ENCODE measurements at regions of chr10 and their contacts with region 1.

Region 1: DNA sequence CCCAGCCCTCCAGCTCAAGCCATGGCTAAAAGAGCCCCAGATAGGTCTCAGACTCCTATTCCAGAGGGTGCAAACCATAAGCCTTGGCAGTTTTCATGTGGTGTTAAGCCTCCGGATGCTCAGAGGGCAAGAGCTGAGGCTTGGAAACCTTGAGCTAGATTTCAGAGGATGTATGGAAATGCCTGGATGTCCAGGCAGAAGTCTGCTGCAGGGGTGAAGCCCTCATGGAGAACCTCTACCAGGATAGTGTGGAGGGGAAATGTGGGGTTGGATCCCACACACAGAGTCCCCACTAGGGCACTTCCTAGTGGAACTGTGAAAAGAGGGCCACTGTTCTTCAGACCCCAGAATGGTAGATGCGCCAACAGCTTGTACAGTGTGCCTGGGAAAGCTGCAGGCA is 13.2 kb upstream of the HPSE2 start:
- DNase-seq: no peak
- ATAC-seq: no peak
- H3K4me3 ChIP-seq: no peak overlapping the region
- H3K27ac ChIP-seq: no peak overlapping the region
- H3K4me1 ChIP-seq: no peaks in the 10 kb centered on the region
- H3K27me3 ChIP-seq: no peaks in the 10 kb centered on the region
- CTCF ChIP-seq: no peak
- POLR2A ChIP-seq: no peak
- RAD21 ChIP-seq: no peak

Region 2: GRCh38 chr10:97914837-97915211 is 1334.0 kb before region 1 on chr10:
- CTCF ChIA-PET with region 1: no interaction called
- POLR2A ChIA-PET with region 1: no interaction called
- dilution Hi-C with region 1: no loop called
- in situ Hi-C with region 1: no loop called
- intact Hi-C with region 1: loop called (anchors 5 kb)
- DNase-seq: peak; percentile 37
- ATAC-seq: peak; percentile 97
- H3K4me3 ChIP-seq: no peak overlapping the region
- H3K27ac ChIP-seq: no peak overlapping the region
- H3K4me1 ChIP-seq: no peaks in the 10 kb centered on the region
- H3K27me3 ChIP-seq: peaks cover 27% of the 10 kb centered on the region
- CTCF ChIP-seq: peak; percentile 80
- POLR2A ChIP-seq: no peak
- RAD21 ChIP-seq: peak; percentile 86

Region 3: GRCh38 chr10:98028168-98028770 is 1220.6 kb before region 1 on chr10:
- CTCF ChIA-PET with region 1: no interaction called
- POLR2A ChIA-PET with region 1: no interaction called
- dilution Hi-C with region 1: no loop called
- in situ Hi-C with region 1: no loop called
- intact Hi-C with region 1: no loop called
- DNase-seq: peak; percentile 3
- ATAC-seq: no peak
- H3K4me3 ChIP-seq: no peak overlapping the region
- H3K27ac ChIP-seq: no peak overlapping the region
- H3K4me1 ChIP-seq: no peaks in the 10 kb centered on the region
- H3K27me3 ChIP-seq: peaks cover 62% of the 10 kb centered on the region
- CTCF ChIP-seq: peak; percentile 41
- POLR2A ChIP-seq: no peak
- RAD21 ChIP-seq: peak; percentile 13

Region 4: GRCh38 chr10:98748298-98748697 is 500.5 kb before region 1 on chr10:
- CTCF ChIA-PET with region 1: no interaction called
- POLR2A ChIA-PET with region 1: no interaction called
- dilution Hi-C with region 1: no loop called
- in situ Hi-C with region 1: no loop called
- intact Hi-C with region 1: loop called (anchors 1 kb)
- DNase-seq: peak; percentile 38
- ATAC-seq: no peak
- H3K4me3 ChIP-seq: no peak overlapping the region
- H3K27ac ChIP-seq: no peak overlapping the region
- H3K4me1 ChIP-seq: no peaks in the 10 kb centered on the region
- H3K27me3 ChIP-seq: no peaks in the 10 kb centered on the region
- CTCF ChIP-seq: peak; percentile 42
- POLR2A ChIP-seq: no peak
- RAD21 ChIP-seq: peak; percentile 20; the same call in 1 of the 2 replicates

Region 5: DNA sequence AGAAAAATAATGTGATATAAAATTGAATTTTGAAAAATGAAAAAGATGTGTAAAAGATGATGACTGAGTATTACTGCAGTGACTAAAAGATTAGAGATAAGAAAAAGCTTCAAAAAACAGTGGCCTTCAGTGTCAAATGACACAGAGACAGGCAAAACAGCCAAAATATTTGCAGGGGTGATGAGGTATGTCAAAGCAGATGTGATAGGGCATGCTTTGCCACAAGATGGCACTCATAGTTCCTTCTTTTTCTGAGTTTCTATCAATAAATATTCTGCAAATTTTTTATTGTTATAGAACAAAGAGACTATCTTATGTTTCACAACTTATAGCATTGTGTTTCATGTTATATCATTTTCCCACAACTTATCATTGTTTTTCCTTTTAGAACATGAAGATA is 458.0 kb before region 1 on chr10:
- CTCF ChIA-PET with region 1: no interaction called
- POLR2A ChIA-PET with region 1: no interaction called
- dilution Hi-C with region 1: no loop called
- in situ Hi-C with region 1: no loop called
- intact Hi-C with region 1: loop called (anchors 5 kb)
- DNase-seq: peak; percentile 12
- ATAC-seq: peak; percentile 53
- H3K4me3 ChIP-seq: no peak overlapping the region
- H3K27ac ChIP-seq: no peak overlapping the region
- H3K4me1 ChIP-seq: no peaks in the 10 kb centered on the region
- H3K27me3 ChIP-seq: no peaks in the 10 kb centered on the region
- CTCF ChIP-seq: peak; percentile 29
- POLR2A ChIP-seq: no peak
- RAD21 ChIP-seq: peak; percentile 29; the same call in 1 of the 2 replicates

Region 6: DNA sequence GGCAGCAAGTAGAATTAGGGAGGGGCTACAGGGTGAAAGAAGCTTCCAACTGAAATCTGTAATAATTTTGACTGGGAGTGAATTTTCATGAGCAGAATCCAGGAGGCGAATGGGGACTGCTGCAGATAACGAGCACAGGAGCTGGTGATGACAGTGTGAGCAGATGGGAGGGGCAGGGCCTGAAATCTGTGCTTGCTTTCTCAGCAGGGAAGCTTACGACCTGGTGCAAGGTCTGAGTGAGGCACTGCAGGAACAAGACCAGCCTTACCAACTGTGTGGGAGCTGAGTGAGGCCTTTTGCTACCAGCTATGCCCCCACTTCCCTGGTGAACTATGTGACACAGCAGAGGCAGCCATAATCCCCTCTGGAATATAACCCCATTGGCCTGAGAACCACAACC is 122.9 kb before region 1 on chr10:
- CTCF ChIA-PET with region 1: no interaction called
- POLR2A ChIA-PET with region 1: no interaction called
- dilution Hi-C with region 1: no loop called
- in situ Hi-C with region 1: no loop called
- intact Hi-C with region 1: no loop called
- DNase-seq: no peak
- ATAC-seq: no peak
- H3K4me3 ChIP-seq: no peak overlapping the region
- H3K27ac ChIP-seq: no peak overlapping the region
- H3K4me1 ChIP-seq: no peaks in the 10 kb centered on the region
- H3K27me3 ChIP-seq: no peaks in the 10 kb centered on the region
- CTCF ChIP-seq: no peak
- POLR2A ChIP-seq: no peak
- RAD21 ChIP-seq: no peak

Region 7: GRCh38 chr10:99224766-99225165 is 24.1 kb before region 1 on chr10:
- CTCF ChIA-PET with region 1: no interaction called
- POLR2A ChIA-PET with region 1: no interaction called
- dilution Hi-C with region 1: no loop called
- in situ Hi-C with region 1: no loop called
- intact Hi-C with region 1: no loop called
- DNase-seq: no peak
- ATAC-seq: no peak
- H3K4me3 ChIP-seq: no peak overlapping the region
- H3K27ac ChIP-seq: no peak overlapping the region
- H3K4me1 ChIP-seq: no peaks in the 10 kb centered on the region
- H3K27me3 ChIP-seq: no peaks in the 10 kb centered on the region
- CTCF ChIP-seq: no peak
- POLR2A ChIP-seq: no peak
- RAD21 ChIP-seq: no peak

Region 8: GRCh38 chr10:99430451-99431189 is 181.8 kb after region 1 on chr10 and contains the start of gene GOT1:
- CTCF ChIA-PET with region 1: no interaction called
- POLR2A ChIA-PET with region 1: no interaction called
- dilution Hi-C with region 1: no loop called
- in situ Hi-C with region 1: no loop called
- intact Hi-C with region 1: no loop called
- DNase-seq: peak; percentile 99
- ATAC-seq: peak; percentile 97
- H3K4me3 ChIP-seq: peak within 1 kb of the TSS; percentile 73
- H3K27ac ChIP-seq: peak within 1 kb of the TSS; percentile 61
- H3K4me1 ChIP-seq: peaks cover 2% of the 10 kb centered on the region; the same call in 1 of the 2 replicates
- H3K27me3 ChIP-seq: no peaks in the 10 kb centered on the region
- CTCF ChIP-seq: no peak; the same call in 1 of the 2 replicates
- POLR2A ChIP-seq: peak; percentile 94
- RAD21 ChIP-seq: no peak
- total RNA-seq, gene GOT1: 38.6 and 46.1 TPM in 2 replicates